Right lobe of liver (tissue), 6 donors: ENCODE measurements at regions of chr3 and their contacts with region 1.

Region 1: DNA sequence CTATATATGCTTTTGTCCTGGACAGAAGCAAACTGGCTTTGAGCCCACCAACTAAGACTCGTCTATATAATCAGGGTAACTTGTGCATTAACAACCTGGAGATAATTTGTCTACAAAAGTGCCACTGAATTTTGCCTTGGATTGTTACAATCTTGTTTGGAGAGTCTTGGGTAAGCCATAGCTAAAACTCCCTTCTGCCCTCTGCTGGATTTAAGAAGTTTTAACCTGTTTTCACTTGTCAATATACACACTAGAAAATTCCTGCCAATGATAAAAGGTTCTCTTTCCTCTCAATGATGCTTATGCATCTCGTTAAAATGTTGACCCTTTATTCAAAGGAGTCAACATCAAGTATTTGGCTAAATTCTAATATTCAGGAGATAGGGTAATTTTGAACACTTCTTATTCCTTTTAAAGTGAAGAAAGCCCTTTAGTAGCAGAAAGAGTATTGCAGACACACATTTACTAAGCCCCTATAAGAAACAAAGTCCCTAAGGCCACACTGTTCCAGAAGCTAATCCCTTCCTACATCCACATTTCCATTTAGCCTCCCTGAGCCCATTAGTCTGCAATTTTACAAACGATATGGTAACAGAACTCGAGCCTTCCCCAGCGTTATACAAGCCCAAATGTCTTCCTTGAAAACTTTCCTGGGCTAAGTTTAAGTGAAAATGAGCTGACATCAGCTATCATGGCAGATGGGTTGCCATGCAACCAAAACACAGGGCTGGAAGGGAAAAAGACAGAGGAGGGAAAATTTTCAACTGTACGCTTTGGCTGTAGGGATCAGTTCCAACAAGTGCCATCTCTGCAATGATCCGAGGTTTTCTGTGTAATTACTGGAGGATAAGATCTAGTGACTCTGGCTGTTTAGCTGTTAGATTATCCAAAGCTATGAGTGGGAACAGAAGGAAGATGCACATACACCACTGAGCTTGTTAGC is 75.9 kb upstream of the FGF12 start:
- DNase-seq: no peak
- ATAC-seq: peak; percentile 73 to 83 (median 78)
- H3K4me3 ChIP-seq: no peak overlapping the region
- H3K27ac ChIP-seq: no peak overlapping the region
- H3K4me1 ChIP-seq: no peaks in the 10 kb centered on the region
- H3K27me3 ChIP-seq: no peaks in the 10 kb centered on the region
- CTCF ChIP-seq: peak; percentile 53 to 68 (median 63)
- POLR2A ChIP-seq: no peak

Region 2: DNA sequence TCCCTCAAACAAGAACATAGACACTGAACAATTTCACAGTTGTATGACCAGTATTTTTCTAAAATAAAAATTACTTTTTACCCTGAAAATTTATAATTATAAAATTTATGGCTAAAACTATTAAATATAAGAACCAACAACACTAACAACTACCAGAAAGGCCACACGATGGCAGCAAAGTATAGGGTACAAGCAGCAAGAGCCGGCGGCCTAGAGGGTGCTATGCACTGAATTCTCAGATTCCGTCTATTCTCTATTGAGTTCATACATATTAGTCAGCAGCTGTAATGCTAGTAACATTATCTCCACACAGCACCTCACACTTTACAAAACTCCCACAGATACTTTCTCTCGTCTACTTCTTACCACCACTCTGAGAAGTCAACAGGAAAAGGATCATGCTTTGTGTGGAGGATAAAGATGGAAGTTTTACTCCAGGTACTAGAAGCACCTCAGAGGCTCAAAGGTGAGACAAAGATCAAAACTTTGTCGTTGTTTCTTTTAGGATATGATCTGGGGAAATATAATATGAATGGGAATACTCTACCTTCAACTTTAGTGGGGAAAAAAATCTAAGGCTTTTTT is 236.4 kb before region 1 on chr3:
- intact Hi-C with region 1: loop called (anchors 10 kb)
- DNase-seq: peak; percentile 62 to 79 (median 68)
- ATAC-seq: peak; percentile 81 to 93 (median 86)
- H3K4me3 ChIP-seq: no peak overlapping the region
- H3K27ac ChIP-seq: no peak overlapping the region
- H3K4me1 ChIP-seq: peaks cover 0 to 8% (median 2%) of the 10 kb centered on the region in 4 donors
- H3K27me3 ChIP-seq: no peaks in the 10 kb centered on the region
- CTCF ChIP-seq: peak; percentile 72 to 86 (median 82)
- POLR2A ChIP-seq: no peak